ENCODE measurements at regions of chr20 and their contacts with region 1.

Region 1: DNA sequence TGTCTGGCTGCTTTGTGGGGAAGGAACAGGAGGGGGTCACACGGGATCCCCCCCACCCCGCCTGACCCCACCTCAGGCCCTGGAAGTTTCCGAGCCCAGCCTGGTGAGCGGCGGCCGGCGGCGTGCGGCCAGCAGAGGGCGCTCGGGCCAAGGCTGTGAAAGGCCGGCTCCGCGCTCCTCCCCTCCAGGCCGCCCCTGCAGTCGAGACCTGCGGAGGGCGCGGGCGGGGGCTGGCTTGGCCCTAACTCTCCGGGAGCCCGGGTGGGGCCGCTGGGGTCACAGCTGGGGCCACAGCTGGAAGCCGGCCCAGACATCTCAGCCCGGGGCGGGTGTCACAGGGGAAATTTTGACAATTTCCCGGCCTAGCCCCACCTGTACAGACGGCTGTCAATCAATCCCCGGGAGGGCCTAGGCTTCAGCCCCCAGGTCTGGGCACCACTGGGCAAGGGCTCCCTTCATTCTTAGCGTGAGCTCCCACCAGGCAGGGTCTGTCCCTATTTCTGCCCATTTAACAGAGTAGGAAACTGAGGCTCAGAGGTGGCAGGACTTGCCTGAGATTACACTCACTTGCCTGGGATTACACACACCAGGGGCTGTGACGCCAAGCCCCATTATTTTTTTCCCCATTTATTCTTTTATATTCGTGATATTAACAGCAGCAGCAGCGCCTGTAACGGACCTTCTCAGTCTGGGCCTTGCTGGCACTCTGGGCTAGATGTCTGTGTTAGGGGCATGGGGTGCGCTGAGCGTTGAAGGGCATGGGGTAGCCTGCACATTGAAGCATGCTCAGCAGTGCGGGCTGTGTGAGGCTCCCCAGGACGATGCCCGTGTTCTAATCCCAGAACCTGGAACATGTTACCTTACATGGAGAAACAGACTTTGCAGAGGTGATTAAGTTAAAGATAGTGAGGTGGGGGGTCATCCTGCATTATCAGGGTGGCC is 23.0 kb downstream of the ZBP1 start:
- DNase-seq: no peak
- ATAC-seq: peak; percentile 90
- H3K4me3 ChIP-seq: no peak overlapping the region
- H3K27ac ChIP-seq: no peak overlapping the region
- H3K4me1 ChIP-seq: peaks cover 4% of the 10 kb centered on the region
- H3K27me3 ChIP-seq: no peaks in the 10 kb centered on the region; a peak in 1 of 4 replicates
- CTCF ChIP-seq: peak; percentile 71 to 92 (median 92)
- EP300 ChIP-seq: no peak
- POLR2A ChIP-seq: no peak
- RAD21 ChIP-seq: peak; percentile 86

Region 2: DNA sequence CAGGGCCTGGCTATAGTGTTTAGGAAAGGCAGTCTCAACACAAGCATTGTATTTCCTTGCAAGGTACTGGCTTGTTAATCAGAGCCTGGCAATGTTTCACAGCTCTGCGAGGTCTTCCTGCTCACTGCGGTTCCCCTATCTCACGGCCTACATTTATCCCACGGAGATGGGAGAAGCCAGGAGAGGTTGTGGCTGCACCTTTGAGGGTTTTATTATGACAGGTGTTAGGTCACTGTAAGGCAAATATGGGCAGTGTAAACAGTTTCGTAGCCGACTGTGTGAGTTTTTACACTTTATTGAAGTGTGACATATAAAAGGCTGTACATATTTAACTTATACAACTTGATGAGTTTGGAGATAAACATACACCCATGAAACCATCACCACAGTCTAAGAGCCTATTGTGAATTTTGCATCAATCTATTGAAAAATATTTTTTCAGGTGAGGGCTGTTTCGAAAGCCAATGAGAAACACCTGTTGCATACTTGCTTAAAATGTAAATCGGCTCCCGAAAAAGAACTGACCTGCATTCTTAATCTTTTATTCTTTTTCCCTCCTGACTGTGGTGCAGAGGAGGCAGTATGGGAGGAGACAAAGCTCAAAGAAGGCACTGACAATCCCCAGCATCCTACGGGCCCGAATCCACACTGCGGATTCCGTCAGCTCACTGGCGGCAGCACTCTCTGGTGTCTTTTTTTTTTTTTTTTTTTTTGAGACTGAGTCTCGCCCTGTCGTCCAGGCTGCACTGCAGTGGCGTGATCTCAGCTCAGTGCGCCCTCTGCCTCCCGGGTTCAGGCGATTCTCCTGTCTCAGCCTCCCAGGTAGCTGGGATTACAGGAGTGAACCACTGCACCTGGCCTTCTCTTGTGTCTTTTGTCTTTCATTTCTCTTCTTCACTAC is 213.6 kb before region 1 on chr20:
- CTCF ChIA-PET with region 1: interaction called, 3 read pairs
- POLR2A ChIA-PET with region 1: no interaction called
- RAD21 ChIA-PET with region 1: interaction called, 3 read pairs
- SMC1A ChIA-PET with region 1: no interaction called
- in situ Hi-C with region 1: loop called (anchors 5 kb)
- intact Hi-C with region 1: loop called (anchors 2 kb)
- DNase-seq: no peak
- ATAC-seq: no peak
- H3K4me3 ChIP-seq: no peak overlapping the region
- H3K27ac ChIP-seq: no peak overlapping the region
- H3K4me1 ChIP-seq: peaks cover 7% of the 10 kb centered on the region
- H3K27me3 ChIP-seq: no peaks in the 10 kb centered on the region
- CTCF ChIP-seq: no peak
- EP300 ChIP-seq: no peak
- POLR2A ChIP-seq: no peak
- RAD21 ChIP-seq: no peak

Region 3: DNA sequence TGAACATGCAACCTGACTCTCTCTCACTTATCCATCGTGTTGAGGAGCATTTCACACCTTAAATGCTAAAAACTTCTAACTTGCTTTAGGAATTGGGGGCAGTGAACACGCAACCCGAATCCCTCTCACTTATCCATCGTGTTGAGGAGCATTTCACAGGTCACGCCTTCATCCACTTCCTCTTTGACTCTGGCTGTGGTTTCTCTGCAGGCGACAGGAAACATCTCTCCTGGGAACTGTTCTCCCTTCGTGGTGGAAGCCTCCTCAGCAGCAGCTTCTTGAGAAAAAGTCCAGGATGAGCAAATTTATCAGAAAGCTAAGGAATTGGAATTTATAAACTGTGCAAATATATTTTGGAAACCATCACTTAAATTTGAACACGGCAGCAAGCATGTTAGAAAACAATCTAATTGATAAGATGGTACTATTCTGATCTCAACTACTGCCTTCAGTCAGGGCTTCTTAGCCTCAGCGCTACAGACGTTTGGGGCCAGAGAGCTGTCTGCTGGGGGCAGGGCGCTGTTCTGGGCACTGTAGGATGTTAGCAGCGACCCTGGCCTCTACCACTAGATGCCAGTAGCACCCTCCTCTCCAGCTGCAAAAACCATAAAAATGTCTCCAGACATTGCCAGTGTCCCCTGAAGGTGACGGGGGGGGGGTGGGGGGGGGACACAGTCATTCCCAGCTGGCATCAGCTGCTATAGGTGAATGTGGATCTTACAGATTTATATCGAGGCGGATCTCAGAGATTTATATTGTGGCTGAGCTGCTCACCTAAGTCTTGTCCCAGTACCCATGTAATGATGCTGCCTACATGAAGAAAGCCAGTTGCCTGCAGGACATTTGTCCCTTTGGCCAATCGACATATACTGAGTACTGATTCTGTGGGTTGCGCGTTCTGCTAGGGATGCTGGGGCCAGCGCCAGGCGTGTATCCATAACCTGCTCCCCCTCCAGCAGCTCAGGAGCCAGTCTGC is 98.6 kb before region 1 on chr20:
- CTCF ChIA-PET with region 1: interaction called, 34 read pairs
- POLR2A ChIA-PET with region 1: no interaction called
- RAD21 ChIA-PET with region 1: interaction called, 31 read pairs
- SMC1A ChIA-PET with region 1: interaction called, 12 read pairs
- in situ Hi-C with region 1: no loop called
- intact Hi-C with region 1: loop called (anchors 1 kb)
- DNase-seq: no peak
- ATAC-seq: peak; percentile 93
- H3K4me3 ChIP-seq: no peak overlapping the region
- H3K27ac ChIP-seq: no peak overlapping the region
- H3K4me1 ChIP-seq: peaks cover 21% of the 10 kb centered on the region
- H3K27me3 ChIP-seq: peaks cover 0 to 2% of the 10 kb centered on the region in 2 experiments; a peak in 1 of 4 replicates
- CTCF ChIP-seq: peak; percentile 54 to 74 (median 70)
- EP300 ChIP-seq: no peak
- POLR2A ChIP-seq: no peak
- RAD21 ChIP-seq: peak; percentile 60

Region 4: GRCh38 chr20:57522380-57522993 is 74.8 kb before region 1 on chr20:
- CTCF ChIA-PET with region 1: interaction called, 21 read pairs
- POLR2A ChIA-PET with region 1: no interaction called
- RAD21 ChIA-PET with region 1: interaction called, 4 read pairs
- SMC1A ChIA-PET with region 1: interaction called, 3 read pairs
- in situ Hi-C with region 1: no loop called
- intact Hi-C with region 1: no loop called
- DNase-seq: no peak
- ATAC-seq: peak; percentile 81
- H3K4me3 ChIP-seq: no peak overlapping the region
- H3K27ac ChIP-seq: no peak overlapping the region
- H3K4me1 ChIP-seq: peaks cover 3% of the 10 kb centered on the region; the same call in 1 of the 2 replicates
- H3K27me3 ChIP-seq: no peaks in the 10 kb centered on the region
- CTCF ChIP-seq: no peak
- EP300 ChIP-seq: no peak
- POLR2A ChIP-seq: no peak
- RAD21 ChIP-seq: no peak

Region 5: GRCh38 chr20:57654363-57654997 is 57.2 kb after region 1 on chr20:
- CTCF ChIA-PET with region 1: interaction called, 22 read pairs
- POLR2A ChIA-PET with region 1: no interaction called
- RAD21 ChIA-PET with region 1: interaction called, 7 read pairs
- SMC1A ChIA-PET with region 1: interaction called, 4 read pairs
- in situ Hi-C with region 1: no loop called
- intact Hi-C with region 1: loop called (anchors 1 kb)
- DNase-seq: no peak
- ATAC-seq: peak; percentile 97
- H3K4me3 ChIP-seq: no peak overlapping the region
- H3K27ac ChIP-seq: no peak overlapping the region
- H3K4me1 ChIP-seq: no peaks in the 10 kb centered on the region
- H3K27me3 ChIP-seq: no peaks in the 10 kb centered on the region
- CTCF ChIP-seq: peak; percentile 88 to 96 (median 94)
- EP300 ChIP-seq: no peak
- POLR2A ChIP-seq: no peak
- RAD21 ChIP-seq: peak; percentile 93

Region 6: DNA sequence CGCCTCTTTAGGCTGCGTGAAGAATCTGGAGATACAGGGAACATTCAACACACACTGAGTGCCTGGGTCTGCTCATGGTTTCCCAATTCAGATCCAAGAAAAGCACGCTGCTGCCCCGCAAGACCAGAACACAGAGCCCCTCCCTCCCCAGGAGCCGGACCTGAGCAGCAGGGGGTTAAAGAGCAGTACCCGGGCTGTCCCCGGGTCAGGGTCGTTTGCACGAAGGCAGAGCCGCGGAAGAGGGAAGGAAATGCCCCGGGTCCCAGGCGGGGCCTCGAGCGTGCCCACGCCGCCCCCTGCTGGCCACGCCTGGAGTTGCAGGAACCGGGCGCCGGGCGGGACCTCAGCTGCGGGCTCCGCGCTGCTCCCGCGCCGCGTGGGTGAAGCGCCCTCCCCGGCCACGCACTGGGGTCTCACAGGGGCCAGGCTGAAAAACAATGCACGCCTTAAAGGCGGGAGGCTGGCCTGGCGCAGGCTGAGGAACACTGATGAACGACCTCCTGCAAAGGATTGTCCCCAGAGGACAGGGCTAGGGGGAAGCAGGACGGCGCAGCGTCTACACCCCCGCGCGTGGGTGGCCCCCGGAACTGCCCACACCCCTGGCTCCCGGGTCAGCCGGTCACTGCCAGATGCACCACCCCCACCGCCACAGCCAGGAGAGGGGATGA is 582.3 kb after region 1 on chr20:
- CTCF ChIA-PET with region 1: interaction called, 20 read pairs
- POLR2A ChIA-PET with region 1: interaction called, 4 read pairs
- RAD21 ChIA-PET with region 1: interaction called, 5 read pairs
- SMC1A ChIA-PET with region 1: interaction called, 4 read pairs
- in situ Hi-C with region 1: loop called (anchors 10 kb)
- intact Hi-C with region 1: loop called (anchors 1 kb)
- DNase-seq: no peak
- ATAC-seq: peak; percentile 98
- H3K4me3 ChIP-seq: no peak overlapping the region
- H3K27ac ChIP-seq: no peak overlapping the region
- H3K4me1 ChIP-seq: no peaks in the 10 kb centered on the region
- H3K27me3 ChIP-seq: peaks cover 0 to 1% of the 10 kb centered on the region in 2 experiments
- CTCF ChIP-seq: peak; percentile 90 to 92 (median 90); a peak in 5 of 6 replicates
- EP300 ChIP-seq: no peak
- POLR2A ChIP-seq: no peak
- RAD21 ChIP-seq: peak; percentile 79